ENCODE measurements at regions of chr1 and their contacts with region 1.

Region 1: GRCh38 chr1:94463765-94464330 is 45.7 kb downstream of the ABCD3 start:
- DNase-seq: peak; percentile 14 to 66
- ATAC-seq: peak; percentile 89 to 92
- H3K4me3 ChIP-seq: no peak overlapping the region
- H3K27ac ChIP-seq: peak overlapping the region in 1 of 2 experiments; percentile 40; a peak in 1 of 6 replicates
- H3K4me1 ChIP-seq: peaks cover 10% of the 10 kb centered on the region
- CTCF ChIP-seq: peak; percentile 81
- EP300 ChIP-seq: no peak
- POLR2A ChIP-seq: no peak
- RAD21 ChIP-seq: peak; percentile 86 to 92

Region 2: GRCh38 chr1:94061513-94062443 is 402.1 kb before region 1 on chr1:
- CTCF ChIA-PET with region 1: interaction called, 15 read pairs
- POLR2A ChIA-PET with region 1: no interaction called
- DNase-seq: peak; percentile 67 to 87
- ATAC-seq: peak; percentile 93 to 97
- H3K4me3 ChIP-seq: no peak overlapping the region
- H3K27ac ChIP-seq: peak overlapping the region; percentile 72 to 78
- H3K4me1 ChIP-seq: peaks cover 21% of the 10 kb centered on the region
- CTCF ChIP-seq: peak; percentile 76
- EP300 ChIP-seq: no peak
- POLR2A ChIP-seq: no peak
- RAD21 ChIP-seq: peak; percentile 91 to 93

Region 3: DNA sequence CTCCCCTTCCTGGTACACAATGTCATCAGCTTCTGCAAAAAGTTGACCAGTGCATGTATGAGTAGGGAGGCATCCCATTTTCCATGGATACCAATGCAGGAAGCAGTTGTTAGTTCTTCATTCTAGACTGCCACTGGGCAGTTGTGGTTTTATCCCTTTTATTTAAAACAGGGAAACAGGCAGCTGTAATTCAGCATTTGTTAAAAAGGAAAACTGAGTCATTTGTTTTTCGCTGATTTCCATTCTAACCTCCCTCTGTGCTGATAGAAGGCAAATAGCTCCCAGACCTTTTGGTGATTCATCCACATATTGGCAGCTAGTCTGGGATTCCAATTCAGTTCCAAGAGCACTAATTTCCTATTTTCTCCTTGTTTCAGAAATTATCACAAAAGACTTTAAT is 321.8 kb before region 1 on chr1:
- CTCF ChIA-PET with region 1: no interaction called
- POLR2A ChIA-PET with region 1: no interaction called
- DNase-seq: no peak
- ATAC-seq: no peak
- H3K4me3 ChIP-seq: no peak overlapping the region
- H3K27ac ChIP-seq: peak overlapping the region in 1 of 2 experiments; percentile 17; a peak in 1 of 6 replicates
- H3K4me1 ChIP-seq: peaks cover 25% of the 10 kb centered on the region
- CTCF ChIP-seq: no peak
- EP300 ChIP-seq: no peak
- POLR2A ChIP-seq: no peak
- RAD21 ChIP-seq: no peak

Region 4: DNA sequence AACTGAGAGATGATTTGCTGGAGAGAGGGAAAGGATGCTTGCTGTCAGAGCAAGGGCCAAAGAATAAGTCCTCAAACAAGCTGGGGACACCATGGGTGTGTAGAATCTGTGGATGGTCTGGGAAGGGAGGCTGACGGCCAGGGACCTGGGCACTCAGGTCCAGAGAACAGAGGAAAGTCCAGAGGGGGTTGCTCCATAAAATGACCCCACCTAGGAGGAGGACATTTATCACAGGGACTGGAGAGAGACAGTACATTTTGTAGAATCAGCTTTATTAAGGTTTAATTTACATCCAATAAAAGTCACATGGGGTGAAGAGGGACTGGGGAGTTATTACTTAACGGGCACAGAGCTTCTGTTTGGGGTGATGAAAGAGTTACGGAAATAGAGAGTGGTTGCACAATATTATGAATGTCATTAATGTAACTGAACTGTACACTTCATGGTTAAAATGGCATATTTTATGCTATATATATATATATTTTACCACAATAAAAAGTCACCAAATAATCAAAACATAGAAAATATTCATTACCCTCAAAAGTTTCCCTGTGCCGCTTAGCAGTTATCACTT is 118.6 kb before region 1 on chr1:
- CTCF ChIA-PET with region 1: interaction called, 24 read pairs
- POLR2A ChIA-PET with region 1: no interaction called
- DNase-seq: no peak
- ATAC-seq: no peak
- H3K4me3 ChIP-seq: no peak overlapping the region
- H3K27ac ChIP-seq: no peak overlapping the region
- H3K4me1 ChIP-seq: no peaks in the 10 kb centered on the region
- CTCF ChIP-seq: no peak
- EP300 ChIP-seq: no peak
- POLR2A ChIP-seq: no peak
- RAD21 ChIP-seq: no peak

Region 5: GRCh38 chr1:94807742-94808491 is 344.1 kb after region 1 on chr1:
- CTCF ChIA-PET with region 1: no interaction called
- POLR2A ChIA-PET with region 1: no interaction called
- DNase-seq: no peak
- ATAC-seq: no peak
- H3K4me3 ChIP-seq: no peak overlapping the region
- H3K27ac ChIP-seq: no peak overlapping the region
- H3K4me1 ChIP-seq: no peaks in the 10 kb centered on the region
- CTCF ChIP-seq: no peak
- EP300 ChIP-seq: no peak
- POLR2A ChIP-seq: no peak
- RAD21 ChIP-seq: no peak